A673 (cell line): ENCODE measurements at regions of chr2 and their contacts with region 1.

Region 1: GRCh38 chr2:19955544-19956422 is 34.1 kb downstream of the WDR35 start:
- DNase-seq: peak; percentile 77
- H3K4me3 ChIP-seq: no peak overlapping the region
- H3K27ac ChIP-seq: no peak overlapping the region
- H3K4me1 ChIP-seq: no peaks in the 10 kb centered on the region
- H3K27me3 ChIP-seq: no peaks in the 10 kb centered on the region
- CTCF ChIP-seq: peak; percentile 90

Region 2: GRCh38 chr2:20015472-20016083 is 59.8 kb after region 1 on chr2:
- CTCF ChIA-PET with region 1: interaction called, 4 read pairs
- POLR2A ChIA-PET with region 1: no interaction called
- intact Hi-C with region 1: loop called (anchors 5 kb)
- DNase-seq: peak; percentile 79
- H3K4me3 ChIP-seq: no peak overlapping the region
- H3K27ac ChIP-seq: no peak overlapping the region
- H3K4me1 ChIP-seq: peaks cover 3% of the 10 kb centered on the region
- H3K27me3 ChIP-seq: no peaks in the 10 kb centered on the region
- CTCF ChIP-seq: peak; percentile 68

Region 3: DNA sequence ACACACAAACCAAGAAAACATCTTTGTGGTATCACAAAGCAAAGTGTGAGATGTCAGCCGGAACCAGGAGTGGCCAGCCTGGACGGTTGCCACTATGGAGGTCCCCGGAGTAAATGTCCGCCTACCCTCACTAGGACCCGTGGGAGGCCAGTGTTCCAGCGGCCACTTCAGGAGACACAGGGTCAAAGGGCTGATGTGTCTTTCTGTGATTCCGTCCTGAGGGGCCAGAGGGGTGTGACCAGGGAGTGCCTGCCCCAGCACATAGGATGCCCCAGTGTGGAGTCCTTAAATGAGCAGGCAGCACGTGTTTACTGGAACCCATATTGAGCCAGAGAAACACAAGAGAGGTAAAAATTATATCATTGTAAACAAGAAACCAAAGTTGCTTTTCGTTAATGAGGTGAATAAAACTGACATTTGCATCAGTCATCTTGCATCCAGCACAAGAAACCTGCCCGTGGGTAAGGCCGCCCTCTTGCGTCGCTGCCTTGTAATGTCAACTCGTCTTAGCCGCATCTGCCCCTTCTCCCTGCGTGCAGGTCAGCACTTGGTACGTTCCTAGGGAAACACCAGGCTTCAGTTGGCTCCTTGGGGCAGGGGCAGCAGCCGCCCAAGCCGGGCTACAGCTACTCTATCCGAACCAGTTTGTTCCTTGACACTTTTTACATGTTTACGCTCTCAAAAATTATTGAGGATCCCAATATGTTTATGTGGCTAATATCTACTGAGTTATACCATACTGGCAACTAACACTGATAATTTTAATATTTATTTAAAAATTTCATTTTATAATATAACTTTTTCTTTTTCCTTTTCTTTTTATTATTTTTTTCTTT is 142.3 kb after region 1 on chr2:
- CTCF ChIA-PET with region 1: interaction called, 8 read pairs
- POLR2A ChIA-PET with region 1: no interaction called
- intact Hi-C with region 1: loop called (anchors 1 kb)
- DNase-seq: peak; percentile 91
- H3K4me3 ChIP-seq: no peak overlapping the region
- H3K27ac ChIP-seq: no peak overlapping the region
- H3K4me1 ChIP-seq: peaks cover 12% of the 10 kb centered on the region
- H3K27me3 ChIP-seq: no peaks in the 10 kb centered on the region
- CTCF ChIP-seq: peak; percentile 96

Region 4: DNA sequence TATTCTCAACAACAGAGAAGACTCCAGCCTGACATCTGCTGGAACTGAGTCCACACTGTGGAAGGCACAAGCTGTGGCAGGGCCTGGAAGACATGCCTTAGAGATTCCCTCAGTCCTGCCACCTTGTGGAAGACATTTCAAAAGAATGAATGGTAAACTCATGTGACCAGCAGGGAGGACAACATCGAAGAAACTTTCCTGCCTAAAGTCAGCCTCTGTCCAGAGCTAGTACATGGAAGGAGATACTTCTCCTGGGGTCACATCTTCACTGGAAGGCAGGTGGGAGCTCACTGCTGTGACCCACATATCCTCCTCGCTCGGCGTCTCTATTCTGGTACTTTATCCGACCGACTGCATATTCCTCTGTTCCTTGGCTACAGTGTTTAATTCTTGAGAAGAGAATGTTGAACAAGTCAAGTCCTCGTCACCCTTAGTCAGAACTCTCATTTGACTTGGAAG is 335.4 kb after region 1 on chr2:
- CTCF ChIA-PET with region 1: no interaction called
- POLR2A ChIA-PET with region 1: no interaction called
- intact Hi-C with region 1: loop called (anchors 5 kb)
- DNase-seq: peak; percentile 86
- H3K4me3 ChIP-seq: no peak overlapping the region
- H3K27ac ChIP-seq: peak overlapping the region; percentile 12
- H3K4me1 ChIP-seq: no peaks in the 10 kb centered on the region
- H3K27me3 ChIP-seq: no peaks in the 10 kb centered on the region
- CTCF ChIP-seq: peak; percentile 79